GM12878 (cell line): ENCODE measurements at regions of chr3 and their contacts with region 1.

Region 1: DNA sequence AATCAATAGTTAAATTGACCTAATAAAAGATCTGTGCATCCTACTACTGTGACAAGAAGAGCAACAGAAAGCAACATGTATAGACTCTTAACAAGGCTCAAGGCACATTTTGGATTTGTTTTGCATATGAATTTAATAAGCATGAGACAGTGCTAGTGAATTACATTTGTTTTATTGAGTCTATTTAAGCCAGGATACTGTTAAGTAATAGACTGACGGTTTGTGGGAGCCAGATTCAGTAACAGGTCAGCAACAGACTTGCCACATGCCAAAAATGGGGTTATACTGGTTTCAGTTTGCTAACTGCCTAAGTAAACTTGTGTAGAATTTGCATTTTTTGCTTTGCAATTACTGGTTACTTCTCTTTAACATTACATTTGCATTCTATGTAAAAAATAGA is 54.0 kb downstream of the MBNL1 start:
- DNase-seq: peak; percentile 61
- ATAC-seq: peak; percentile 82
- H3K4me3 ChIP-seq: peak overlapping the region; percentile 6; the same call in 1 of the 2 replicates
- H3K27ac ChIP-seq: peak overlapping the region; percentile 51
- H3K4me1 ChIP-seq: peaks cover 21% of the 10 kb centered on the region
- H3K27me3 ChIP-seq: no peaks in the 10 kb centered on the region
- CTCF ChIP-seq: no peak
- EP300 ChIP-seq: peak; percentile 69 to 85
- POLR2A ChIP-seq: no peak
- RAD21 ChIP-seq: no peak

Region 2: GRCh38 chr3:152298393-152299242 is 24.1 kb before region 1 on chr3:
- CTCF ChIA-PET with region 1: interaction called, 5 read pairs
- POLR2A ChIA-PET with region 1: interaction called, 3 read pairs
- RAD21 ChIA-PET with region 1: interaction called, 7 read pairs
- SMC1A ChIA-PET with region 1: interaction called, 29 read pairs
- in situ Hi-C with region 1: no loop called
- intact Hi-C with region 1: loop called (anchors 2 kb)
- DNase-seq: peak; percentile 74
- ATAC-seq: peak; percentile 71
- H3K4me3 ChIP-seq: peak overlapping the region; percentile 8
- H3K27ac ChIP-seq: peak overlapping the region; percentile 56
- H3K4me1 ChIP-seq: peaks cover 40% of the 10 kb centered on the region
- H3K27me3 ChIP-seq: no peaks in the 10 kb centered on the region
- CTCF ChIP-seq: no peak
- EP300 ChIP-seq: no peak
- POLR2A ChIP-seq: no peak
- RAD21 ChIP-seq: no peak

Region 3: GRCh38 chr3:152309535-152310307 is 13.0 kb before region 1 on chr3:
- CTCF ChIA-PET with region 1: interaction called, 11 read pairs
- POLR2A ChIA-PET with region 1: interaction called, 4 read pairs
- RAD21 ChIA-PET with region 1: interaction called, 5 read pairs
- SMC1A ChIA-PET with region 1: interaction called, 72 read pairs
- in situ Hi-C with region 1: no loop called
- intact Hi-C with region 1: no loop called
- DNase-seq: no peak
- ATAC-seq: peak; percentile 49
- H3K4me3 ChIP-seq: no peak overlapping the region
- H3K27ac ChIP-seq: no peak overlapping the region
- H3K4me1 ChIP-seq: no peaks in the 10 kb centered on the region
- H3K27me3 ChIP-seq: no peaks in the 10 kb centered on the region
- CTCF ChIP-seq: no peak
- EP300 ChIP-seq: no peak
- POLR2A ChIP-seq: no peak
- RAD21 ChIP-seq: no peak

Region 4: GRCh38 chr3:152338159-152338720 is 15.5 kb after region 1 on chr3:
- CTCF ChIA-PET with region 1: interaction called, 8 read pairs
- POLR2A ChIA-PET with region 1: interaction called, 11 read pairs
- RAD21 ChIA-PET with region 1: interaction called, 12 read pairs
- SMC1A ChIA-PET with region 1: interaction called, 25 read pairs
- in situ Hi-C with region 1: no loop called
- intact Hi-C with region 1: no loop called
- DNase-seq: no peak
- ATAC-seq: no peak
- H3K4me3 ChIP-seq: no peak overlapping the region
- H3K27ac ChIP-seq: no peak overlapping the region
- H3K4me1 ChIP-seq: peaks cover 23% of the 10 kb centered on the region
- H3K27me3 ChIP-seq: no peaks in the 10 kb centered on the region
- CTCF ChIP-seq: no peak
- EP300 ChIP-seq: no peak
- POLR2A ChIP-seq: no peak
- RAD21 ChIP-seq: no peak

Region 5: GRCh38 chr3:152434142-152434541 is 111.4 kb after region 1 on chr3:
- CTCF ChIA-PET with region 1: no interaction called
- POLR2A ChIA-PET with region 1: no interaction called
- RAD21 ChIA-PET with region 1: no interaction called
- SMC1A ChIA-PET with region 1: no interaction called
- in situ Hi-C with region 1: no loop called
- intact Hi-C with region 1: no loop called
- DNase-seq: no peak
- ATAC-seq: no peak
- H3K4me3 ChIP-seq: no peak overlapping the region
- H3K27ac ChIP-seq: no peak overlapping the region
- H3K4me1 ChIP-seq: no peaks in the 10 kb centered on the region
- H3K27me3 ChIP-seq: no peaks in the 10 kb centered on the region
- CTCF ChIP-seq: no peak
- EP300 ChIP-seq: no peak
- POLR2A ChIP-seq: no peak
- RAD21 ChIP-seq: no peak

Region 6: DNA sequence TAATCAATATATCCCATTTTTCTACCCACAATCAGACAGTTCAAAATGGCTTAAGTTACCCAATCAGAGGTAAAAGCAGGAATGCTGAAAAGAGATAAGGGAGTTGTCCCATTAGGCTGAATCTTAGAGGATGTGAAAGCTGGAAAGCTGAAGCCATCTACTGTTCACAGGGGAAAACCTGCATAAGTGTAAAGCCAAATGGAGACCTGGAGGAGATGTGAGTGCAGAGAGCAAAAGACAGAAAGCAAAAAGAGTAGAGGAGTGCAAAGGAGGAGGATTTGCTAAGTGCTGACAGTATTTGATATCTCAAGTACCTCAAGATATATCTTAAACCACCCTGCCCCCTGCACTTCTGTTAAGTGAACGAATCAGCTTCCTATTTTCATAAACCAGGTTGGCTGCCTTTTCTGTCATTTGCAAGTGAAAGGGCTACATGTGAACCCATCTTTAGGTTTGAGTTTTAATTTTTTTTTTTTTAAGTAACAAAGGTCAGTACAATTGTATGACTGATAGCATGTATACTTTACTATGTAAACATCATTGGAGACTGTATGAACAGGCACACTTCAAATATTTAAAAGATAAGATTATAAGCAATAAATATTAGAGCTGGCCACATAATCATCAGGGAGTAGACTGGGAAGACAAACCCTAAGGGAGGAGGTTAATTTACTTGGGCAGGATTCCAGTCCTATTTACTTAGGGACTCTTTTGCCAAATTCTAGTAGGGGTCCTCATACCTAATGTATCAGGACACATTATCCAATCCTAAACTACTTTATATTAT is 489.4 kb after region 1 on chr3:
- CTCF ChIA-PET with region 1: no interaction called
- POLR2A ChIA-PET with region 1: no interaction called
- RAD21 ChIA-PET with region 1: no interaction called
- SMC1A ChIA-PET with region 1: no interaction called
- in situ Hi-C with region 1: no loop called
- intact Hi-C with region 1: no loop called
- DNase-seq: no peak
- ATAC-seq: no peak
- H3K4me3 ChIP-seq: no peak overlapping the region
- H3K27ac ChIP-seq: no peak overlapping the region
- H3K4me1 ChIP-seq: 0 out of 2 replicates have a peak, but pooled peaks cover 1% of the 10 kb centered on the region
- H3K27me3 ChIP-seq: no peaks in the 10 kb centered on the region
- CTCF ChIP-seq: no peak
- EP300 ChIP-seq: no peak
- POLR2A ChIP-seq: no peak
- RAD21 ChIP-seq: peak; percentile 29; the same call in 1 of the 2 replicates